ENCODE measurements at regions of chr9 and their contacts with region 1.

Region 1: GRCh38 chr9:94772639-94773303 is 46.3 kb downstream of the AOPEP start:
- DNase-seq: no peak
- H3K4me3 Mint-ChIP-seq: no peak overlapping the region
- H3K27ac Mint-ChIP-seq: no peak overlapping the region
- H3K4me1 Mint-ChIP-seq: peaks cover 13% of the 10 kb centered on the region
- H3K27me3 Mint-ChIP-seq: no peaks in the 10 kb centered on the region

Region 2: GRCh38 chr9:94802793-94803192 is 30.0 kb after region 1 on chr9:
- CTCF ChIA-PET with region 1: no interaction called
- POLR2A ChIA-PET with region 1: no interaction called
- intact Hi-C with region 1: loop called (anchors 2 kb)
- DNase-seq: peak; percentile 61
- H3K4me3 Mint-ChIP-seq: no peak overlapping the region
- H3K27ac Mint-ChIP-seq: no peak overlapping the region
- H3K4me1 Mint-ChIP-seq: peaks cover 18% of the 10 kb centered on the region
- H3K27me3 Mint-ChIP-seq: no peaks in the 10 kb centered on the region

Measured in activated CD4-positive, alpha-beta memory T cell treated with anti-CD3 and anti-CD28 coated beads for 36 hours (primary cell).